ENCODE measurements at regions of chr11 and their contacts with region 1.

Region 1: GRCh38 chr11:47348859-47349258 is 3.6 kb downstream of the MYBPC3 start:
- DNase-seq: peak; percentile 54
- H3K4me3 ChIP-seq: no peak overlapping the region
- H3K27ac ChIP-seq: no peak overlapping the region
- H3K4me1 ChIP-seq: no peaks in the 10 kb centered on the region
- CTCF ChIP-seq: peak; percentile 65

Region 2: DNA sequence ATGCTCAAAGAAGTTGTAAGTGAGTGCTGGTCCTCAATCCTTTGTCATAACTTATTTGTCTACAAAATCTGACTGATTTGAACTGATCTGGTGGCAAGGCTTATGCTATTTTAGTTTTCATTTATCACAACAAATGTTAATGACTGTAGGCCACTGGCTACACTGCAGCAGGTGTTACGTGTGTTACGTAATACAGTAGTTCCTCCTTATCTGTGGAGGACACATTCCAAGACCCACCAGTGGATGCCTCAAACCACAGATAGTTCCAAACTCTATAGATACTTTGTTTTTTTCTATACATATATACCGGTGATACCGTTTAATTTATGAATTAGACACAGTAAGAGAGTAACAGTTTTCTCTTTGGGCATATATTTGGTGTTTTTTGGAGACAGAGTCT is 71.9 kb before region 1 on chr11:
- CTCF ChIA-PET with region 1: no interaction called
- POLR2A ChIA-PET with region 1: no interaction called
- intact Hi-C with region 1: loop called (anchors 5 kb)
- DNase-seq: no peak
- H3K4me3 ChIP-seq: no peak overlapping the region
- H3K27ac ChIP-seq: no peak overlapping the region
- H3K4me1 ChIP-seq: peaks cover 11% of the 10 kb centered on the region
- CTCF ChIP-seq: no peak

Measured in OCI-LY7 (cell line).